ENCODE measurements at regions of chr3 and their contacts with region 1.

Region 1: DNA sequence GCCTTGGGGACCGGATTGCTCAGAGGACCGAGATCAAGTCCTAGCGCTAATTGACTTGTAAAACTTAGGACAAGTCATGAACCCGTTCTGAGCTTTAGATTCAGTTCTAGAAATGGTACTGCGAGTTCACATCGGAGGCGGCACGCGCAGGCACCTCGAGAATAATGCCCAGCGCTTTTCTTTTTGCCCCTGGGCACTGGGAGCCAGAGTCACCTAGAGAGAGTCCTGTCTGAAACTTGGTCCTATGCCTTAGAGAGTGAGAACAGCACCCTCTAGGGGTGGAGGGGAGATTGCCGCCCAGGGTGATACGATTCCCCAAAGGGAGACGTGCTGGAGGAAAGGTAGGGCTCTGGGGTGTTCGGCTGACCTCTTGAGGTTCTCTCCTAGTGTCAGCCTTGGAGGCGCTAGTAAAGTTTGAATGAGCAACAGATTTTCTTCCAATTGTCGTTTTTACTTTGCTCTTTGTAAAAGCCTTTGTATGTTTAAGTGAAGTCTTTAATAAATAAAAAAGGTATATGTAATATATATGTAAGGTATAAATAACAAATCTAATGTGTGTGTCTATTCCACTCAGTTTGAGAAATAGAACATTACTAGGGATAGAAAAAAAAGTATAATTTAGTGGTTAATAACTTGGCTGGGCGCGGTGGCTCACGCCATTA is 826 bp downstream of the EEF1AKMT4 start:
- DNase-seq: peak; percentile 97
- H3K4me3 Mint-ChIP-seq: peak overlapping the region; percentile 97
- H3K27ac Mint-ChIP-seq: peak overlapping the region; percentile 82
- H3K4me1 Mint-ChIP-seq: peaks cover 9% of the 10 kb centered on the region
- H3K27me3 Mint-ChIP-seq: no peaks in the 10 kb centered on the region
- CTCF ChIP-seq: peak; percentile 80

Region 2: DNA sequence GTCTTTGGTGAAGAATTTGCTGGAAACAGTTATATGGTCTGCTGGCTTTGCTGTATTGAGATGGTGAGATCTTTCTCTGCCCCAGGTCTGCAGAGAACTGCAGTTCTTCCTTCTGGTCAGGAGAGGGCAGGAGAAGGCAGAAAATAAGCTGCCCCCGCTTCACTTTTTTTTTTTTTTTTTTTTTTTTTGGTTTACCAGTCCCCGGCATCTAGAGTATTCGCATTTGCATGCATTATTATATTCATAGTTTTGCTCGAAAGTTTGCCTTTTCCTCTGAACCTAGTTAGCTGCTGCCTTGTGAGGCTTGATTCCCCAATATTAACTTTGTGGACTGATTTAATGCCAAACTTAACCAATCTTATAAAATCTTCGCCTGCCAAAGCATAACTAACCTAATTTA is 355.0 kb before region 1 on chr3:
- CTCF ChIA-PET with region 1: interaction called, 10 read pairs
- POLR2A ChIA-PET with region 1: interaction called, 4 read pairs
- intact Hi-C with region 1: loop called (anchors 2 kb)
- DNase-seq: peak; percentile 60
- H3K4me3 Mint-ChIP-seq: no peak overlapping the region
- H3K27ac Mint-ChIP-seq: no peak overlapping the region
- H3K4me1 Mint-ChIP-seq: no peaks in the 10 kb centered on the region
- H3K27me3 Mint-ChIP-seq: no peaks in the 10 kb centered on the region
- CTCF ChIP-seq: peak; percentile 82

Region 3: DNA sequence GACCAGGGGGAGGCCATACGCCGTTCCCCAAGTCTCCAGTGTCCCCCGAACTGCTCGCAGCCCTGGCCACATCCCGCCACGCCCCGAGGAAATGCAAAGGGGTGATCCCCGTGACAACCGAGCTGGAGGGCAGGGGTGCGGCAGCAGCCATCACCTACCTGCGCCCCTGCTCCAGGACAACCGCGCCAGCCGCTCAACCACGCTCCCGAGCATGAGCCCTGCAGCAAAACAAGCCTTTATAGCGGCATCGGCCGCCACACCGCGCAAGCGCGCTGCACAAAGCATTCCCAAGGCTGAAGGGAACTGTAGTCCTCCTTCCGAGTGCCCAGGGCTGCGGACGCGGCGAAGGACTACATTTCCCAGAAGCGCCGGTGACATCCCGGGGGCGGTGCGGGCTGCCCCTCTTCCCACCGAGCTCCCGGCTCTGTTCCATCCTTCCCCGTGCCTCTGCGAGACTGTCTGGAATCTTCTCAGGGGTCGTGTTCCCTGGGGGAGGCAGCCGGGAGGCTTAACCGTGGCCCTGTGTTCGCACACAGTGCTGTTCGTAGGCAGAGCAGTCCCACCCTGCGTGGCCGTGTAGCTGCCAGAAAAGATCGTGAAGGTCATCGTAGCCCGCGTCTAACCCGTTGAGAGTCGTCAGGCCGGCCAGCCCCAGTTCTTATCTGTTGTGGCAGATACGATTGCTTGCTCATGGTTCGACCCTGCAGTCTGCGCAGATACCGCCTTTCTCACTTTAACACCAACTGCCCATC is 232.4 kb before region 1 on chr3 and contains the start of gene ABCC5:
- CTCF ChIA-PET with region 1: interaction called, 3 read pairs
- POLR2A ChIA-PET with region 1: no interaction called
- intact Hi-C with region 1: loop called (anchors 1 kb)
- DNase-seq: peak; percentile 90
- H3K4me3 Mint-ChIP-seq: peak within 1 kb of the TSS; percentile 99
- H3K27ac Mint-ChIP-seq: peak within 1 kb of the TSS; percentile 71
- H3K4me1 Mint-ChIP-seq: peaks cover 30% of the 10 kb centered on the region
- H3K27me3 Mint-ChIP-seq: peaks cover 12% of the 10 kb centered on the region
- CTCF ChIP-seq: peak; percentile 28
- total RNA-seq, gene ABCC5: 16.5 and 17.9 TPM in 2 replicates

Region 4: GRCh38 chr3:184145111-184145524 is 105.2 kb before region 1 on chr3:
- CTCF ChIA-PET with region 1: interaction called, 10 read pairs
- POLR2A ChIA-PET with region 1: interaction called, 3 read pairs
- intact Hi-C with region 1: loop called (anchors 1 kb)
- DNase-seq: peak; percentile 68
- H3K4me3 Mint-ChIP-seq: no peak overlapping the region
- H3K27ac Mint-ChIP-seq: no peak overlapping the region
- H3K4me1 Mint-ChIP-seq: peaks cover 2% of the 10 kb centered on the region
- H3K27me3 Mint-ChIP-seq: no peaks in the 10 kb centered on the region
- CTCF ChIP-seq: peak; percentile 33

Region 5: DNA sequence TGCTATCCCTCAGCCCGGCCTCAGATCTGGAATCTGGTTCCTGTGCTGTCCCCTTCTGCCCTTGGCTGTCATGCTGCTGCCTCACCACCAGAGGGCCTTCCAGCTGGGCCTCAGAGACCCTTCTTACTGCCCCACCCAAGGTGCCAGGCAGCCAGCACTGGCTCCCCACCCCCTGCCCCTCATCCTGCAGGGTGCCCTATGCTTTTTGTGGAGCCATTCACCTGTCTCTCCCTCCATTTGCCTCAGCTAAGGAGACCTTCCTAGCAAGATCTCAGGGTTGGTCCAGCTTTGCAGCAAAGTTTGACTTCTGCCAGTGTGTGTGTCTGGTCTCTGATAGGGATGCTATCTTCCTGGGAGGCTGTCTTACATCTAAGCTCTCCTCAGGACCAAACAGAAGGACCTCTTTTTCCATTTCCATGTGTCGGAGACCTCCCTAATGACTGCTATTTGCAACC is 22.8 kb before region 1 on chr3:
- CTCF ChIA-PET with region 1: interaction called, 15 read pairs
- POLR2A ChIA-PET with region 1: no interaction called
- intact Hi-C with region 1: loop called (anchors 1 kb)
- DNase-seq: peak; percentile 47
- H3K4me3 Mint-ChIP-seq: no peak overlapping the region
- H3K27ac Mint-ChIP-seq: no peak overlapping the region
- H3K4me1 Mint-ChIP-seq: peaks cover 6% of the 10 kb centered on the region
- H3K27me3 Mint-ChIP-seq: peaks cover 58% of the 10 kb centered on the region
- CTCF ChIP-seq: peak; percentile 93

Region 6: GRCh38 chr3:184289426-184289938 is 39.2 kb after region 1 on chr3:
- CTCF ChIA-PET with region 1: interaction called, 4 read pairs
- POLR2A ChIA-PET with region 1: no interaction called
- intact Hi-C with region 1: loop called (anchors 5 kb)
- DNase-seq: peak; percentile 73
- H3K4me3 Mint-ChIP-seq: no peak overlapping the region
- H3K27ac Mint-ChIP-seq: no peak overlapping the region
- H3K4me1 Mint-ChIP-seq: no peaks in the 10 kb centered on the region
- H3K27me3 Mint-ChIP-seq: peaks cover 14% of the 10 kb centered on the region
- CTCF ChIP-seq: peak; percentile 70